Activated CD4-positive, alpha-beta T cell treated with anti-CD3 and anti-CD28 coated beads, Interleukin-2, amount 10 ng/mL, durations not matched to agents 7 days and 5 days (primary cell): ENCODE measurements at regions of chrX and their contacts with region 1.

Region 1: GRCh38 chrX:39850630-39851152 is 247.1 kb downstream of the BCOR start:
- DNase-seq: peak; percentile 62
- H3K4me3 Mint-ChIP-seq: peak overlapping the region; percentile 13
- H3K27ac Mint-ChIP-seq: no peak overlapping the region
- H3K4me1 Mint-ChIP-seq: peaks cover 57% of the 10 kb centered on the region
- H3K27me3 Mint-ChIP-seq: no peaks in the 10 kb centered on the region

Region 2: GRCh38 chrX:39772057-39772832 is 78.4 kb before region 1 on chrX:
- CTCF ChIA-PET with region 1: no interaction called
- POLR2A ChIA-PET with region 1: no interaction called
- DNase-seq: peak; percentile 43
- H3K4me3 Mint-ChIP-seq: peak overlapping the region; percentile 31
- H3K27ac Mint-ChIP-seq: peak overlapping the region; percentile 96
- H3K4me1 Mint-ChIP-seq: peaks cover 47% of the 10 kb centered on the region
- H3K27me3 Mint-ChIP-seq: no peaks in the 10 kb centered on the region

Region 3: GRCh38 chrX:39840581-39841093 is 10.1 kb before region 1 on chrX:
- CTCF ChIA-PET with region 1: interaction called, 17 read pairs
- POLR2A ChIA-PET with region 1: no interaction called
- DNase-seq: no peak
- H3K4me3 Mint-ChIP-seq: no peak overlapping the region
- H3K27ac Mint-ChIP-seq: no peak overlapping the region
- H3K4me1 Mint-ChIP-seq: no peaks in the 10 kb centered on the region
- H3K27me3 Mint-ChIP-seq: no peaks in the 10 kb centered on the region

Region 4: DNA sequence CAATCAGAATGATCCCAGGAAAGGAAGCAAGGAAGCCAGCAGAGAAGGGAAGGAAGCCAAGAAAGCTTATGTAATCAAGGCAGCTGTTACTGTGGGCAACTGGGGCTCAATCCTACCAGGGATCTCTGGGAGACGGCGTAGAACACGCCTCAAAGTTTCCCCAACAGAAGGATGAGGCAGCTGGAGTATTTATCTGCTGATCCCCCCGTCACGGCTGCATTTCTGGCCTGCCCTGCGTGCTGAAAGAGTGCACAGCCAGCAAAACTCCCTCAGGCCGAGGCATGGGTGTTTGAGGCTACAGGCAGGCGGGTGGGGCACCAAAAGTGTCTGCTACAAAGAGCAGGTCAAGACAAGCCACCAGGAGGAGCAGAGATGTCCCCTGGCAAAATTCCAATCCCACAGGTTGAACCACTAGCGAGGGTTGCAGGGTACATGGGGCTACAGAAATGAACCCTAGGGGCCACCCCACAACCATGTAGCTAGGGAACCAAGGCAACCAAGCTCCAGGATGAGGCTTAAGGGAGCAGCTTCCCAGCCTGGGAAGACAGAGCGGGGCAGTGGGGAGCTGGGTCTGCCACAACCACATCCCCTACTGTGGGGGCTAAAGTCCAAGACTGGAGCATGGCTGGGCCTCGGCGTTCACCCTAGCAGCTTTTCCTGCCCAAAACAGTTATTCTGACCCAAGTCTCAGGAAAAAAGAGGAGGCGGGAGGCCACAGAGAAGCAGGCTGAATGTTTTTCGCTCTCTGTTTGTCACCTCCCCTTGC is 133.7 kb after region 1 on chrX:
- CTCF ChIA-PET with region 1: no interaction called
- POLR2A ChIA-PET with region 1: no interaction called
- DNase-seq: no peak
- H3K4me3 Mint-ChIP-seq: no peak overlapping the region
- H3K27ac Mint-ChIP-seq: no peak overlapping the region
- H3K4me1 Mint-ChIP-seq: peaks cover 1% of the 10 kb centered on the region
- H3K27me3 Mint-ChIP-seq: peaks cover 2% of the 10 kb centered on the region